Ovary (tissue), 10 donors: ENCODE measurements at regions of chr16 and their contacts with region 1.

Region 1: DNA sequence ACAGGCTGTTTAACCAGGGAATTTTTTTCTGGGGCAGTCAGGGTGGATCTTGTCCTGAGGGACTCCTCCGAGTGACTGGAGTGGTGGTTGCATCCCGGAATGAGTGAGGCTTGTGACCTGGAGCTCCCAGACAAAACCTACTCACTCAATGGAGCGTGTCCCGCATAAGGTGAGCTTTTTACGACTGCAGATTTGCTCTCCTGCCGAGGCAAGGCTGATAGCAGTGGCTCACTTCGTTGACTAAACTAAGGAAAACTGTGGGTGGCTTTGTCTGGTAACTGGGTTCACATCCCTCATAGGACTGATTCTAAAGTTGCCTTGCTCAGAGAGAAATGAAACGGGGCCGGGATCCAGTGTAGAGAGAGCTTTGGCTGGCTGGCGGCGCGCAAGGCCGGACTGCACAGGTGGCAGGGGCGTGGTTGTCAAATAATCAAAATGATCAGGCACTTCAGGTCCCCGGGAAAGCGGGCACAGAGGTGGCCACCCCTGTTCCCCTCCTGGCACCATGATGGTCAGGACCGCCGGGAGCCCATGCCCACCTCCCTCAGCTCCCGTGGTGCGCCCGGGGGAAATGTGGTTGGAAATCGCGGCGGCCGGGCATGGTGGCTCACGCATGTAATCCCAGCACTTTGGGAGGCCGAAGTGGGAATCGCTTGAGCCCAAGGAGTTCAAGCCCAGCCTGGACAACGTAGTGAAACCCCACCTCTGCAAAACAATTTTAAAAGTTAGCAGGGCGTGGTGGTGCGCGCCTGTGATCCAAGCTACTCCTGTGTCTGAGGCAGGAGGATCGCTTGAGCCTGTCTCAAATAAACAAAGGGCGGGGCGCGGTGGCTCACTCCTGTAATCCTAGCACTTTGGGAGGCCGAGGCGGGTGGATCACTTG is 26.5 kb downstream of the ZNF213 start:
- DNase-seq: peak in 1 of 5 donors; percentile 25
- H3K4me3 ChIP-seq: no peak overlapping the region
- H3K27ac ChIP-seq: no peak overlapping the region
- H3K4me1 ChIP-seq: peaks cover 8% of the 10 kb centered on the region
- H3K27me3 ChIP-seq: no peaks in the 10 kb centered on the region
- CTCF ChIP-seq: no peak
- EP300 ChIP-seq: no peak
- POLR2A ChIP-seq: no peak

Region 2: GRCh38 chr16:3029537-3030402 is 131.6 kb before region 1 on chr16:
- intact Hi-C with region 1: loop called in 1 of 4 experiments (anchors 10 kb)
- DNase-seq: no peak
- H3K4me3 ChIP-seq: no peak overlapping the region
- H3K27ac ChIP-seq: no peak overlapping the region
- H3K4me1 ChIP-seq: no peaks in the 10 kb centered on the region
- H3K27me3 ChIP-seq: peaks cover 2% of the 10 kb centered on the region
- CTCF ChIP-seq: no peak
- EP300 ChIP-seq: no peak
- POLR2A ChIP-seq: no peak

Region 3: GRCh38 chr16:3059000-3059722 is 102.2 kb before region 1 on chr16:
- intact Hi-C with region 1: loop called in 3 of 4 experiments (anchors 5 to 10 kb)
- DNase-seq: peak; percentile 76 to 89 (median 84)
- H3K4me3 ChIP-seq: peak overlapping the region; percentile 85
- H3K27ac ChIP-seq: no peak overlapping the region
- H3K4me1 ChIP-seq: peaks cover 8% of the 10 kb centered on the region
- H3K27me3 ChIP-seq: no peaks in the 10 kb centered on the region
- CTCF ChIP-seq: peak; percentile 93 to 99 (median 97)
- EP300 ChIP-seq: no peak
- POLR2A ChIP-seq: no peak

Region 4: GRCh38 chr16:3188925-3189825 is 27.8 kb after region 1 on chr16:
- intact Hi-C with region 1: no loop called
- DNase-seq: no peak
- H3K4me3 ChIP-seq: no peak overlapping the region
- H3K27ac ChIP-seq: no peak overlapping the region
- H3K4me1 ChIP-seq: peaks cover 1% of the 10 kb centered on the region
- H3K27me3 ChIP-seq: no peaks in the 10 kb centered on the region
- CTCF ChIP-seq: no peak
- EP300 ChIP-seq: no peak
- POLR2A ChIP-seq: no peak

Region 5: DNA sequence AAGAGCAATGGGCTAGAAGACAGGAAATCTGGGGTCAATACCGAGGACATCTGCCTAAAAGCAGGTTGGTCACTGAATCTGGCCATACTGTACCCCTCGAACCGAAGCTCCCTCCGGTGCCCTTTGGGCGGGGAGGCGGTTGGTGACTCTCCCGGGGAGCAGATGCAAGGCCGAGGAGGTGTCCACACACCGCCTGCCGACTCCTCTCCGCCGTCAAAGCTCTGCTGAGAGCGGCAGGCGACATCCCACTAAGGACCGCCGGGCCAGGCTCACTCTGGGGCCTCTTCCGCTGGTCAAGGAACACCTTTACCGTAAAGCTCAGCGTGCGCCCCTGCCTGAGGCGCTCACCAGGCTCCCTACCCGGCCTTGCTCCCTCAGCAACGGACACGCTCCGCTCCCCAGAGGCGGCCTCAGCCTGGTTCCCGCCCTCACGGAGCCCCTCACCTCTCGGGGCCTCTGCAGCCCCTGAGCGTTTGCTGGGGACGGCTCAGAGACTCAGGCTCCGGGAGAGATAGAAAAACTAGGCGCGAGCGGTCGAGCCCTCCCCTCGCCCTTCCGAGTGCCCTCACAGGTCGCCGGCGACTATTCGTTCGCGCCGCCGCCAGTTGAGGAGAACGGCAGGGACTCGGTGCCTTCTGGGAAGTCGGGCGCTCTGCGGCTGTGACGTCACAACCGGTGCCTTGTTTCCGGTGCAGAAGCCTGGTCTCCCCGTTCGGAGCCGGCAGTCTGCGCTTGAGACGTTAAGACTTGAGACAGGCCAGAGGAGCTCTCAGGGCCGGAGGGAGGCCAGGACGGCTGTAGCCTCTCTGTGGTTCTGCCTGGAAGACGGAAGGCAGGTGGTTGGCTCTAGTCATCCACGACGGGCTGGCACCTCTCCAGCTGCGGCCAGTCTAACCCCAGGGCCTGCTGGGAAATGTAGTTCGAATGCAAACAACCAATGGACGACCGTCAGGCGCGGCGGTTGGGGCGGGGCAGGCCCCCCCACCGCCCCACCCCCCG is 73.5 kb after region 1 on chr16 and contains the start of gene ZNF200:
- intact Hi-C with region 1: no loop called
- DNase-seq: peak; percentile 95 to 97 (median 96)
- H3K4me3 ChIP-seq: peak within 1 kb of the TSS; percentile 96
- H3K27ac ChIP-seq: peak within 1 kb of the TSS; percentile 96 to 97
- H3K4me1 ChIP-seq: peaks cover 7% of the 10 kb centered on the region
- H3K27me3 ChIP-seq: no peaks in the 10 kb centered on the region
- CTCF ChIP-seq: no peak
- EP300 ChIP-seq: no peak
- POLR2A ChIP-seq: peak; percentile 49
- total RNA-seq, gene ZNF200: 7.3 to 9.2 (median 7.5) TPM

Region 6: GRCh38 chr16:4487955-4488498 is 1326.7 kb after region 1 on chr16:
- intact Hi-C with region 1: loop called in 1 of 4 experiments (anchors 5 kb)
- DNase-seq: no peak
- H3K4me3 ChIP-seq: no peak overlapping the region
- H3K27ac ChIP-seq: no peak overlapping the region
- H3K4me1 ChIP-seq: no peaks in the 10 kb centered on the region
- H3K27me3 ChIP-seq: no peaks in the 10 kb centered on the region
- CTCF ChIP-seq: no peak
- EP300 ChIP-seq: no peak
- POLR2A ChIP-seq: no peak

Region 7: DNA sequence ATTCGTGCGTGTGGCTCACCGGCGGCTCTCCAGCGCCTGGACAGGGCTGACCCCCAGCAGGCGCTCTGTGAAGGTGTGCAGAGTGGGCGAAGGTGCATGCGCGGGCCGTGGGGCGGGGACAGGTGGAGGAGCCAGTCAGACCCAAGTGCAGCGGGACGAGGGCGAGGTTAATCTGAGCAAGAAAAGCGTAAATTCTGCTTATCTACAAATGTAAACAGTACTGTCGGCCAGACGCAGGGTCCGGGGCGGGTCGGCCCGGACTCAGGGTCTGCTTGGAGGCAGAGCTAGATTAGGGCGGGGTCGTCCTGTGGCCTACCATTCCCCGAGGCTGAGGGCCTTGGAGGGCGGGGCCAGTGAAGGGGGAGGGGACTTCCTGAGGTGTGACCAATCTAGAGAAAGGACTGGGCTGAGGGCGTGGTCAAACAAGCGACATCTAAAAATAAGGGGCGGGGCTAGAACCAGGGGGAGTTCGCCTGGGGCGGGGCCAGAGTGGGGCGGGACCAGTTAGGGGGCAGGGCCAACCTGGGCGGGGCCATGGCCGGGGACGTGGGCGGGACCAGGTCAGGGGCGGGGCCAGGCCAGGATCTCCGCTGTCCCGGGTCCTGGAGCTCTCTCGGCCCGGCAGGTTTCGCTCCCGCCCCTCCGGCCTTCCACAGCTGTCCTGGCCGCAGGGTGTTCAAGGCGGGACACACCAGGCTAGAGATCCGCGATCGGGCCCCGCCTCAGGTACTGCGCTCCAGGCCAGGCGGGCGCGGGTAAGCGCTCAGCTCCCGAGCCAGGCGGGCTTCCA is 1796.5 kb after region 1 on chr16 and contains the start of gene SEC14L5:
- intact Hi-C with region 1: loop called in 1 of 4 experiments (anchors 10 kb)
- DNase-seq: peak; percentile 98 to 99 (median 99)
- H3K4me3 ChIP-seq: peak within 1 kb of the TSS; percentile 40
- H3K27ac ChIP-seq: peak within 1 kb of the TSS in 1 of 2 donors; percentile 24
- H3K4me1 ChIP-seq: peaks cover 4% of the 10 kb centered on the region
- H3K27me3 ChIP-seq: no peaks in the 10 kb centered on the region
- CTCF ChIP-seq: no peak
- EP300 ChIP-seq: no peak
- POLR2A ChIP-seq: no peak
- total RNA-seq, gene SEC14L5: 0.11 to 0.87 (median 0.38) TPM